Activated CD4-positive, alpha-beta memory T cell treated with anti-CD3 and anti-CD28 coated beads for 36 hours (primary cell): ENCODE measurements at regions of chr2 and their contacts with region 1.

Region 1: GRCh38 chr2:26330113-26330549 is 15.8 kb upstream of the SELENOI start:
- DNase-seq: peak; percentile 92
- H3K4me3 Mint-ChIP-seq: peak overlapping the region; percentile 10
- H3K27ac Mint-ChIP-seq: no peak overlapping the region
- H3K4me1 Mint-ChIP-seq: peaks cover 12% of the 10 kb centered on the region
- H3K27me3 Mint-ChIP-seq: no peaks in the 10 kb centered on the region

Region 2: GRCh38 chr2:25951071-25951547 is 379.0 kb before region 1 on chr2:
- CTCF ChIA-PET with region 1: no interaction called
- POLR2A ChIA-PET with region 1: no interaction called
- intact Hi-C with region 1: loop called (anchors 2 kb)
- DNase-seq: peak; percentile 81
- H3K4me3 Mint-ChIP-seq: no peak overlapping the region
- H3K27ac Mint-ChIP-seq: no peak overlapping the region
- H3K4me1 Mint-ChIP-seq: no peaks in the 10 kb centered on the region
- H3K27me3 Mint-ChIP-seq: no peaks in the 10 kb centered on the region

Region 3: GRCh38 chr2:26184555-26185303 is 145.4 kb before region 1 on chr2:
- CTCF ChIA-PET with region 1: interaction called, 3 read pairs
- POLR2A ChIA-PET with region 1: no interaction called
- intact Hi-C with region 1: loop called (anchors 10 kb)
- DNase-seq: peak; percentile 89
- H3K4me3 Mint-ChIP-seq: peak overlapping the region; percentile 72
- H3K27ac Mint-ChIP-seq: no peak overlapping the region
- H3K4me1 Mint-ChIP-seq: peaks cover 14% of the 10 kb centered on the region
- H3K27me3 Mint-ChIP-seq: peaks cover 13% of the 10 kb centered on the region

Region 4: DNA sequence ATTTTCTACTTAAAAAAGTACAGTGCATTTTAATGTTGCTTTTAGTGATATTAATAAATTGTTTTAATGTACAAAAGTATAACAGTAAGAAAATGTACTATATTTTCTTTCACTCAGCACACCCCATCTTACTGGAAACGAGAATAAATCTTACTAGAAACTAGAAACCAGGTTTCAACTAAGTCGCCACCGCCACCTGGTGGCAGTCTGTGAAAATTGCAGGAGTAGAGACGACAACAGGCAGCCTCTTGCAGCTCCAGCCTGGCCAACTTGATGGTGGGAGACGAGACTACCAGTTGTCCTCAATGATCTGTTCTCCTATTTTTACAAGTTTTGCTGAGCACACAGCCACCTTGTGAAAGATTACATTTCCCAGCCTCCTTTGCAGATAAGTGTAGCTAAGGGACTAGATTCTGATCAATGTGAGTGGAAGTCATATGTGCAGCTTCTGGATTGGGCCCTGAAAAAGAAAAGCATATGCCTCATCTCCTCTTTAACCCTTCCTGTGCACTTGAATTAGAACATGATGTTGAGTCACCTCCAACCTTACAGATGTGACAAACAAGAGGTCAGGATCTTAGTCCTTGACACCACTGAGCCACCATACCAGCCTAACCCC is 139.1 kb after region 1 on chr2:
- CTCF ChIA-PET with region 1: interaction called, 3 read pairs
- POLR2A ChIA-PET with region 1: no interaction called
- intact Hi-C with region 1: loop called (anchors 5 kb)
- DNase-seq: peak; percentile 83
- H3K4me3 Mint-ChIP-seq: no peak overlapping the region
- H3K27ac Mint-ChIP-seq: no peak overlapping the region
- H3K4me1 Mint-ChIP-seq: no peaks in the 10 kb centered on the region
- H3K27me3 Mint-ChIP-seq: no peaks in the 10 kb centered on the region